Posterior vena cava (tissue), 2 donors: ENCODE measurements at regions of chr5 and their contacts with region 1.

Region 1: DNA sequence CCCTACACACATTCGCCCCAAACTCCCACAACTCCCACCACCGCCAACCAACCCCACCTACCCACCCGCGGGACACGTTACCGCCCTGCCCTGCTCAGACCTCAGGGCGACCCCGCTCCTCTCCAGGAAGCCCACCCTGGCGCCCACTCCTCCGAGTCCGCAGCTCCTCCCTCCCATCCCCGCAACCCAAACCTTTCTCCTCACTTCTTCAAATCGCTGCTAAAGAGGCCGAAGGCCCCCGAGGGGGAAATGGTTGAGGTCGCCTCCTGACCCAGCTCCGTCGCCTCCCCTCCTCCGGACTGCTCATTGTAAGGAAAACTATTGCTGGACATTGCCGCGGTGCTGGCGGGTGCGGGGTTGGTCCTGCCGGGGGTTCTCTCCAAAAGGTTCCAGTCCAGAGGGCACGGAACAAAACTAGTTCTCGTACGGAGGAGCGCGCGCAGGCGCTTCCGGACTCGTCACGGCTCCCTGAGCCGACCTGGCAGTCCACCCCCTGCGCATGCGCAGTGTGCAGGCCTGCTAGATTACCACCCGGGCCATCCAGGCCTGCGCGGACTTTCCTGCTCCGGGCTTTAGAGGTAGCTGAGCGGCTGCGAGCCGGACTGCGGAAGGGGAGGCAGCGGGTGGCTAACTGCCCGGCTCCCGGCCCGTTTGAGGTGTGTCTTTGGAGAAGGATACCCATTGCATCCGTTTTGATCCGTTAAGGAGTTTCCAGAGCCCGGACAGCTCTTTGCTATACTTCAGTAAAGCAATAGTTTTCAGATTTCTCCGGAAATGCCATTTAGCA is at the start of gene AP3B1:
- DNase-seq: peak; percentile 100
- total RNA-seq, gene AP3B1: 37.0 to 44.4 TPM

Region 2: DNA sequence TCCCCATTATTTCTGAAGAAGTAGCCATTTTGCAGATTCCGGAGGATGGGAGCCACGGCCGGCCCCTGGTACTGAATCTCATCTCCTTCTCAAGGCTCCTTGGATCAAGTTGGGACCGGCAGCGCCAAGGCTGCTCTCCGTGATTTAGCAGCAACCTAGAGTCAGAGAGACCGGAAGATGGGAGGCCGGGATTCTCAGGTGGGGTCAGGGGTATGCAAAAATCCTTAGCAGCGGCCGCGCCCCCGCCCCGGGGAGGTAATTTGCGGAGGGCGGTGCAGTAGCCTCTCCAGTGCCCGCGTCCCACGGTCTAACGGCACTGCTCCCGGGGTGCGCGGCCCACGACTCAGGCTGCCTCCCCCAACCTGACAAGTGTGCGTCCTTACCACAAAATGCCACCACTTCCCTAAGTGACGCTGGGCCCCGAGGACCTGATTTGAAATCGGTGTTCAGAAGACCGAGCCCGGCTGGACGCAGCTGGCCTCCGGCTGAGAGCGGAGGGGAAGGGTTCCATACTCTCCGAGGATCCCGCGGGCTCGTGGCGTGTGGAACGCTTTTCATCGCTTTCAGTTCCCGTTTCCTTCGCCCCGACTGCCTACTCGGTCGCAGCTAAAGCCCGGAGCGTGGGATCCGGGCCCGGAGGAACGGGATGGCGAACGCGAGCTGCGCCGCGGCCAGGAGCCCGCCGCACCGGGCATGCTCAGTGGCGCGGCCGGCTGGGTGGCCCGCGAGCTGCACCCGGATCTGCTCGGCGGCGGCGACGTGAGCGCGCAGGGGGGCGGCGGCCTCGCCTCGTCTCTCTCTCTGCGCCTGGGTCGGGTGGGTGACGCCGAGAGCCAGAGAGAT is 65.6 kb after region 1 on chr5 and contains the start of gene SCAMP1:
- intact Hi-C with region 1: loop called (anchors 5 to 10 kb)
- DNase-seq: peak; percentile 98
- total RNA-seq, gene SCAMP1: 32.4 to 46.1 TPM

Region 3: GRCh38 chr5:78899922-78900362 is 605.5 kb after region 1 on chr5:
- intact Hi-C with region 1: no loop called
- DNase-seq: no peak